Activated B cell treated with CpG ODN at 0.5 μM for 24 hours (primary cell): ENCODE measurements at regions of chr9 and their contacts with region 1.

Region 1: GRCh38 chr9:120714088-120714845 is at the start of gene MEGF9:
- DNase-seq: peak; percentile 95
- ATAC-seq: peak; percentile 94
- H3K4me3 Mint-ChIP-seq: peak within 1 kb of the TSS; percentile 90
- H3K27ac Mint-ChIP-seq: peak within 1 kb of the TSS; percentile 86
- H3K4me1 Mint-ChIP-seq: peaks cover 38% of the 10 kb centered on the region
- H3K27me3 Mint-ChIP-seq: no peaks in the 10 kb centered on the region
- CTCF ChIP-seq: no peak
- total RNA-seq, gene MEGF9: 8.5 and 9.0 TPM in 2 replicates

Region 2: GRCh38 chr9:120619751-120620655 is 94.3 kb before region 1 on chr9:
- CTCF ChIA-PET with region 1: interaction called, 10 read pairs
- POLR2A ChIA-PET with region 1: no interaction called
- intact Hi-C with region 1: loop called (anchors 1 kb)
- DNase-seq: no peak
- ATAC-seq: peak; percentile 79
- H3K4me3 Mint-ChIP-seq: no peak overlapping the region
- H3K27ac Mint-ChIP-seq: no peak overlapping the region
- H3K4me1 Mint-ChIP-seq: peaks cover 2% of the 10 kb centered on the region
- H3K27me3 Mint-ChIP-seq: no peaks in the 10 kb centered on the region
- CTCF ChIP-seq: peak; percentile 99

Region 3: GRCh38 chr9:120642129-120642770 is 72.0 kb before region 1 on chr9:
- CTCF ChIA-PET with region 1: no interaction called
- POLR2A ChIA-PET with region 1: no interaction called
- intact Hi-C with region 1: no loop called
- DNase-seq: no peak
- ATAC-seq: no peak
- H3K4me3 Mint-ChIP-seq: no peak overlapping the region
- H3K27ac Mint-ChIP-seq: no peak overlapping the region
- H3K4me1 Mint-ChIP-seq: no peaks in the 10 kb centered on the region
- H3K27me3 Mint-ChIP-seq: no peaks in the 10 kb centered on the region
- CTCF ChIP-seq: no peak

Region 4: GRCh38 chr9:120742951-120743416 is 28.7 kb after region 1 on chr9:
- CTCF ChIA-PET with region 1: no interaction called
- POLR2A ChIA-PET with region 1: interaction called, 17 read pairs
- intact Hi-C with region 1: no loop called
- DNase-seq: no peak
- ATAC-seq: peak; percentile 62
- H3K4me3 Mint-ChIP-seq: no peak overlapping the region
- H3K27ac Mint-ChIP-seq: no peak overlapping the region
- H3K4me1 Mint-ChIP-seq: no peaks in the 10 kb centered on the region
- H3K27me3 Mint-ChIP-seq: no peaks in the 10 kb centered on the region
- CTCF ChIP-seq: no peak

Region 5: DNA sequence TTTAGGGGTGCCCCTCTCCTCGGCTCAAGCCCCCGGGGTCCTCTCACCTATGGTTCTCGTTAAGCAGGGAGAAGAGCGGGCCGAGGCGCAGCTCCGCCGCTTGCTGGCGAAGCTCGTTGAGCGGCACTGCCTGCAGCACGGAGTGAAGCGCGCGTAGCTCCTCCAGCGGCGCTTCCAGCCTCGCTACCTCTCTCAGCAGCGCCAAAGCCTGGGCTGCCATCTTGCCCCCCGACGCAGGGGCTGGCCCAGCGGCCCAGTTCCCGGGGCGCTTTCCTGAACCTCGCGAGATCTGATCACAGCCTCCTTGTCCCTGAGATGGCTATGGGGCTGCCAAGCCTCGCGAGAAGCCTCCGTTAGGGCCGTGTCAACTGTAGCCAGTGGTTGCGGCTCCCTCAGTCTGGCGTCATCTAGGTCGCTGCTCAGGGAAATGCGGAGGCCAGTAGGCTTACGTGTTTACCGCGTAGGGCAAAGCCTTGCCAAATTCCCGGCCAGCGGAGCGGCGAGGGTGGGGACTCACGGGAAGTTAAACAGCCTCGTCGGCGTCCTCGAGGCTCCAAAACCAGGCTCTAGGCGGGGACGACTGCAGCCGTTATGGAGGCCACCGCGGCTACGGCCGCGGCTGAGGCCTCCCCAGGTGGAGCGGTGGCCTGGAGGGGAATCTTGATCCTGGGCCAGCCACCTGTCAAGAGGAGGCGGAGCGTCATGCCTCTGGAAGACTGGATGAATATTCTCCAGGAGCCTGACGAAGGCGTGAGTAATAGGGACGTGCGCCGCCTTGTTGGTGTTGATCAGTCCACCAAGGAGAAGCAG is 128.6 kb after region 1 on chr9 and contains the start of gene PSMD5:
- CTCF ChIA-PET with region 1: no interaction called
- POLR2A ChIA-PET with region 1: no interaction called
- intact Hi-C with region 1: loop called (anchors 2 kb)
- DNase-seq: peak; percentile 75
- ATAC-seq: peak; percentile 99
- H3K4me3 Mint-ChIP-seq: peak within 1 kb of the TSS; percentile 90
- H3K27ac Mint-ChIP-seq: peak within 1 kb of the TSS; percentile 91
- H3K4me1 Mint-ChIP-seq: peaks cover 42% of the 10 kb centered on the region
- H3K27me3 Mint-ChIP-seq: no peaks in the 10 kb centered on the region
- CTCF ChIP-seq: no peak
- total RNA-seq, gene PSMD5: 34.8 and 38.9 TPM in 2 replicates